CD4-positive, alpha-beta memory T cell (primary cell): ENCODE measurements at regions of chr1 and their contacts with region 1.

Region 1: DNA sequence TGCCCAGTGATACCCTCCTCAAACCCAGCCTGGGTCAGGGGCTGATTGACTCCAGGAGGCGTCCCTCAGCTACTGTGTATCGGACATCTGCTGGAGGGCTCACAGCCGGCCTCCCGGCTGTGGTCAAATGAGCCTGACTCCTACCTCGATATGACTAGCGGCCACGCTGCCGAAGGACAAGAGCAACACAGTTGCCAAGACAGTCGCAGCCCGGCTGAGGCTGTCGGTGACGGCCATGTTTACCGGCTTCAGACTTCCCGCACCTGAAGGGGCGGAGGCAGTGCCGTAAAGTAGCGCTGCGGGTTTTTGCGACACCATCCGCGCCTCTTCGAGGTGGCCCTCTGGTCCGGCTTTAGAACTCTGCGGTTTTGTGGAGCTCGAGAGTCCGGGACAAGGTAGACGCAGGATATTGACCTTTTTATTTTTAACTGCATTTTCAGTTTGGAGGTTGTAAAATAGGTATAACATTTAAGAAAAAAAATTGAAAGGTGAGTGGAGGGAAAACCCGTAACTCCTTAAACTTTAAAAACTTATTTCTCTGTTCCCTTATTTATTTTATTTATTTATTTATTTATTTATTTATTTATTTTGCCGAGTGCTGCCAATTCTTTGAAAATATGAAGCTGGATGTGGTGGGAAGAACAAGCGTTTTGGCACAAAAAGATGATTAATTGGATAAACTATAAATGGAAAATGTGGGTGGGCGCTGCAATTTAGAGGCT is at the start of gene PIGK:
- DNase-seq: peak; percentile 84 to 87 (median 86)
- H3K4me3 ChIP-seq: peak within 1 kb of the TSS; percentile 90 to 99
- H3K4me3 Mint-ChIP-seq: peak within 1 kb of the TSS; percentile 93 to 99 (median 96)
- H3K27ac ChIP-seq: peak within 1 kb of the TSS; percentile 74
- H3K27ac Mint-ChIP-seq: peak within 1 kb of the TSS; percentile 93 to 97 (median 96)
- H3K4me1 ChIP-seq: peaks cover 33% of the 10 kb centered on the region
- H3K4me1 Mint-ChIP-seq: peaks cover 28 to 64% (median 50%) of the 10 kb centered on the region in 4 donors
- H3K27me3 ChIP-seq: no peaks in the 10 kb centered on the region
- H3K27me3 Mint-ChIP-seq: no peaks in the 10 kb centered on the region
- total RNA-seq, gene PIGK: 26.4 to 28.2 TPM

Region 2: GRCh38 chr1:77156214-77156613 is 63.1 kb before region 1 on chr1:
- CTCF ChIA-PET with region 1: no interaction called
- POLR2A ChIA-PET with region 1: no interaction called
- intact Hi-C with region 1: loop called (anchors 5 kb)
- DNase-seq: no peak
- H3K4me3 ChIP-seq: no peak overlapping the region
- H3K4me3 Mint-ChIP-seq: no peak overlapping the region
- H3K27ac ChIP-seq: no peak overlapping the region
- H3K27ac Mint-ChIP-seq: peak overlapping the region in 1 of 7 donors; percentile 2
- H3K4me1 ChIP-seq: no peaks in the 10 kb centered on the region
- H3K4me1 Mint-ChIP-seq: peaks cover 1 to 8% (median 4%) of the 10 kb centered on the region in 4 donors
- H3K27me3 ChIP-seq: no peaks in the 10 kb centered on the region
- H3K27me3 Mint-ChIP-seq: no peaks in the 10 kb centered on the region

Region 3: DNA sequence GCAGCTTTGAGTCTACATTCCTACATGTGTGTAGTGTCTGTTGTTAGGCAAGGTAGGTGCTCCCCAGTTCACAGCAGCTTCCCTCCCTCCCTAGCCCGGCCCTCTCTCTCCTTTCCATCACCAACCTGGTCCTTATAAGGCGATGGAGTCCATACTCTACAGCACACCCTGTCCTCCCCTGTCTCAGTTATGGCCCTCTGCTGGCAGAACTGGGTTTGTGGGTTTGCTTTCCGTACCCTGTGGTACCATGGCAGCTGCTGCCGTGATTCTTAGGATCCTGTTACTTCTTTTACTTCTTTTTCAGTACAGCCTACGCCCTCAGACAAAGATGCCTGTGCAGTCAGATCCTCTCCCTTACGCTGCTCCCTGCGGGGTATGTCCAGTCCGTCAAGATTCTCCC is 94.2 kb after region 1 on chr1:
- CTCF ChIA-PET with region 1: interaction called, 3 read pairs
- POLR2A ChIA-PET with region 1: interaction called, 8 read pairs
- intact Hi-C with region 1: loop called (anchors 1 kb)
- DNase-seq: peak; percentile 12 to 25 (median 24)
- H3K4me3 ChIP-seq: no peak overlapping the region
- H3K4me3 Mint-ChIP-seq: peak overlapping the region in 1 of 8 donors; percentile 26
- H3K27ac ChIP-seq: no peak overlapping the region
- H3K27ac Mint-ChIP-seq: peak overlapping the region in 1 of 7 donors; percentile 37
- H3K4me1 ChIP-seq: peaks cover 17% of the 10 kb centered on the region
- H3K4me1 Mint-ChIP-seq: peaks cover 18 to 34% (median 26%) of the 10 kb centered on the region in 4 donors
- H3K27me3 ChIP-seq: no peaks in the 10 kb centered on the region
- H3K27me3 Mint-ChIP-seq: peaks cover 1 to 3% of the 10 kb centered on the region in 2 donors

Region 4: GRCh38 chr1:77430966-77431690 is 211.8 kb after region 1 on chr1:
- CTCF ChIA-PET with region 1: no interaction called
- POLR2A ChIA-PET with region 1: no interaction called
- intact Hi-C with region 1: loop called (anchors 1 kb)
- DNase-seq: peak in 4 of 5 donors; percentile 50 to 68 (median 64)
- H3K4me3 ChIP-seq: peak overlapping the region in 1 of 2 donors; percentile 21
- H3K4me3 Mint-ChIP-seq: no peak overlapping the region
- H3K27ac ChIP-seq: peak overlapping the region; percentile 44
- H3K27ac Mint-ChIP-seq: no peak overlapping the region
- H3K4me1 ChIP-seq: peaks cover 59% of the 10 kb centered on the region
- H3K4me1 Mint-ChIP-seq: peaks cover 17 to 19% (median 17%) of the 10 kb centered on the region in 4 donors
- H3K27me3 ChIP-seq: no peaks in the 10 kb centered on the region
- H3K27me3 Mint-ChIP-seq: no peaks in the 10 kb centered on the region